ENCODE measurements at regions of chr15 and their contacts with region 1.

Region 1: GRCh38 chr15:76931397-76932007 is at the start of gene RCN2:
- DNase-seq: peak; percentile 96
- H3K4me3 Mint-ChIP-seq: peak within 1 kb of the TSS; percentile 88
- H3K27ac Mint-ChIP-seq: peak within 1 kb of the TSS; percentile 65
- H3K4me1 Mint-ChIP-seq: peaks cover 28% of the 10 kb centered on the region
- H3K27me3 Mint-ChIP-seq: no peaks in the 10 kb centered on the region
- total RNA-seq, gene RCN2: 27.0 to 27.6 TPM

Region 2: GRCh38 chr15:76336254-76337058 is 595.0 kb before region 1 on chr15 and contains the start of gene ISL2:
- CTCF ChIA-PET with region 1: no interaction called
- POLR2A ChIA-PET with region 1: no interaction called
- intact Hi-C with region 1: loop called (anchors 1 kb)
- DNase-seq: peak; percentile 87
- H3K4me3 Mint-ChIP-seq: peak within 1 kb of the TSS; percentile 49
- H3K27ac Mint-ChIP-seq: no peak within 1 kb of the TSS
- H3K4me1 Mint-ChIP-seq: peaks cover 44% of the 10 kb centered on the region
- H3K27me3 Mint-ChIP-seq: peaks cover 65% of the 10 kb centered on the region
- total RNA-seq, gene ISL2: 0.15 to 0.19 TPM

Region 3: DNA sequence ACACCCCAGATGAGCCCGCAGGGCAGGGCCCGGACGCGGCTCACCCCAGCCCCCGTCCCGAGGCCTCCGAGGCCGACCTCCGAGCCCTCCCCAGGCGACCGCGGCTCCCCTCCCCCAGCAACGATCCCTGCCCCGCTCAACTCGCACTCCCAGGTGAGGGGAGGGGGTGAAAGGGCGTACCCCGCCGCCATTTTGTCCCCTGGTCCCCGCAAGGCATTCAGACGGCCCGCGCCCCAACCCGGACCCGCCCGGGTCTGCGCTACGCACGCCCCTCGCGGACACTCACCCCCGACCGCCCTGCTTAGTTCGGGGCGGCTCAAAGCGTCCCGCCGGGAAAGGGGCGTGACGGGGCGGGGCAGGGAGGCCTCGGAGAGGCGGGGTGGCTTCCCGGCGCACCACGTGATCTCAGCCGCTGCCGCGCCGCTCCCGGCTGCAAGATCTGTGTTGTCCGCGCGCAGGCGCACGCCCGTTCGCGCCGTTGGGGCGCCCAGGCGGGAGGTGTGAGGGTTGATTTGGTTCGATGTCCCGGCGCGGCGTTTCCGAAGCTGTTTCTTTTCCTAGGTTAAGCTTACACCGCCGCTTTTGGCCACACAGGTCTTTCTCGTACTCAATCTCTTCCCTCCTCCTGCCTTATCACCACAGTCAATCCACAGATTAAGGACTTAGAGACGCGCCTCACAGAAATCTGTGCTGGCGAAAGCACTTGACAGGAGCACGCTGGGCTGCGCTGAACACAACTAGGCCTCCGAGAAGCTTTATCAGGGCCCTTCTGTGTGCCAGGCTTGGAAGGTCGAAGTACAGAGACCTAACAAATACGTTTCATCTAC is 26.3 kb before region 1 on chr15 and contains the start of gene SCAPER:
- CTCF ChIA-PET with region 1: interaction called, 7 read pairs
- POLR2A ChIA-PET with region 1: interaction called, 6 read pairs
- intact Hi-C with region 1: loop called (anchors 1 kb)
- DNase-seq: peak; percentile 95
- H3K4me3 Mint-ChIP-seq: peak within 1 kb of the TSS; percentile 91
- H3K27ac Mint-ChIP-seq: peak within 1 kb of the TSS; percentile 83
- H3K4me1 Mint-ChIP-seq: peaks cover 31% of the 10 kb centered on the region
- H3K27me3 Mint-ChIP-seq: no peaks in the 10 kb centered on the region
- total RNA-seq, gene SCAPER: 21.5 to 22.9 TPM

Region 4: DNA sequence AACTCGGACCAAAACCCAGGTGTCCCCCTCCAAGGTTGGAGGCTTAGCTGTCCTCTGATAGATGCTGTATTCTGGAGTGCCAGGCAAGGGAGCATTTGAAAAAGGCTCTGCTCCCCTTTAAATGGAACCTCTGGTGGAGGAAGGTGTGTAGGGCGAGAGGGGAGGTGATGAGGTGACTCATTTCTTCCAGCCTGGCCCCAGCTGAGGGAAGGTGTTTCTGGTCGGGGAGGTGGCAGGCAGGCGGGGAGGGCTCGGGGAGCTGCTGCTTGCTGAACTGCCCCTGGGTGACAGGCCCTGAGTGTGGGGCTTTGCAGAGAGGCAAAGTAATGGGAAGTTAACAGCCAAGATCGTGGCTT is 82.3 kb after region 1 on chr15:
- CTCF ChIA-PET with region 1: no interaction called
- POLR2A ChIA-PET with region 1: no interaction called
- intact Hi-C with region 1: no loop called
- DNase-seq: peak; percentile 95
- H3K4me3 Mint-ChIP-seq: peak overlapping the region; percentile 73
- H3K27ac Mint-ChIP-seq: peak overlapping the region; percentile 83
- H3K4me1 Mint-ChIP-seq: peaks cover 87% of the 10 kb centered on the region
- H3K27me3 Mint-ChIP-seq: peaks cover 1% of the 10 kb centered on the region

Region 5: GRCh38 chr15:77335298-77335697 is 403.8 kb after region 1 on chr15:
- CTCF ChIA-PET with region 1: no interaction called
- POLR2A ChIA-PET with region 1: no interaction called
- intact Hi-C with region 1: no loop called
- DNase-seq: no peak
- H3K4me3 Mint-ChIP-seq: no peak overlapping the region
- H3K27ac Mint-ChIP-seq: no peak overlapping the region
- H3K4me1 Mint-ChIP-seq: no peaks in the 10 kb centered on the region
- H3K27me3 Mint-ChIP-seq: peaks cover 1% of the 10 kb centered on the region

Measured in activated CD4-positive, alpha-beta memory T cell treated with anti-CD3 and anti-CD28 coated beads for 36 hours (primary cell).